ENCODE measurements at regions of chr22 and their contacts with region 1.

Region 1: GRCh38 chr22:50306753-50307749 is at the start of gene PLXNB2:
- DNase-seq: peak; percentile 72
- ATAC-seq: peak; percentile 6; the same call in 1 of the 2 replicates
- H3K4me3 ChIP-seq: peak within 1 kb of the TSS; percentile 88
- H3K27ac ChIP-seq: peak within 1 kb of the TSS; percentile 99
- H3K4me1 ChIP-seq: peaks cover 37% of the 10 kb centered on the region
- H3K27me3 ChIP-seq: no peaks in the 10 kb centered on the region
- CTCF ChIP-seq: no peak
- total RNA-seq, gene PLXNB2: 68.2 and 82.9 TPM in 2 replicates

Region 2: GRCh38 chr22:50282361-50282760 is 24.7 kb before region 1 on chr22:
- CTCF ChIA-PET with region 1: no interaction called
- POLR2A ChIA-PET with region 1: interaction called, 6 read pairs
- intact Hi-C with region 1: loop called (anchors 1 kb)
- DNase-seq: peak; percentile 89
- ATAC-seq: peak; percentile 90
- H3K4me3 ChIP-seq: peak overlapping the region; percentile 49; the same call in 1 of the 2 replicates
- H3K27ac ChIP-seq: peak overlapping the region; percentile 83
- H3K4me1 ChIP-seq: peaks cover 16% of the 10 kb centered on the region
- H3K27me3 ChIP-seq: no peaks in the 10 kb centered on the region
- CTCF ChIP-seq: no peak

Region 3: GRCh38 chr22:50326959-50327710 is 20.1 kb after region 1 on chr22 and contains the start of gene DENND6B:
- CTCF ChIA-PET with region 1: interaction called, 5 read pairs
- POLR2A ChIA-PET with region 1: interaction called, 17 read pairs
- intact Hi-C with region 1: no loop called
- DNase-seq: peak; percentile 76
- ATAC-seq: peak; percentile 95
- H3K4me3 ChIP-seq: peak within 1 kb of the TSS; percentile 77
- H3K27ac ChIP-seq: peak within 1 kb of the TSS; percentile 52
- H3K4me1 ChIP-seq: peaks cover 17% of the 10 kb centered on the region
- H3K27me3 ChIP-seq: no peaks in the 10 kb centered on the region
- CTCF ChIP-seq: 0 out of 2 replicates have a peak, but pooled peaks have one; percentile 21
- total RNA-seq, gene DENND6B: 1.1 and 1.7 TPM in 2 replicates

Measured in PC-3 (cell line).